GM12878 (cell line): ENCODE measurements at regions of chr12 and their contacts with region 1.

Region 1: DNA sequence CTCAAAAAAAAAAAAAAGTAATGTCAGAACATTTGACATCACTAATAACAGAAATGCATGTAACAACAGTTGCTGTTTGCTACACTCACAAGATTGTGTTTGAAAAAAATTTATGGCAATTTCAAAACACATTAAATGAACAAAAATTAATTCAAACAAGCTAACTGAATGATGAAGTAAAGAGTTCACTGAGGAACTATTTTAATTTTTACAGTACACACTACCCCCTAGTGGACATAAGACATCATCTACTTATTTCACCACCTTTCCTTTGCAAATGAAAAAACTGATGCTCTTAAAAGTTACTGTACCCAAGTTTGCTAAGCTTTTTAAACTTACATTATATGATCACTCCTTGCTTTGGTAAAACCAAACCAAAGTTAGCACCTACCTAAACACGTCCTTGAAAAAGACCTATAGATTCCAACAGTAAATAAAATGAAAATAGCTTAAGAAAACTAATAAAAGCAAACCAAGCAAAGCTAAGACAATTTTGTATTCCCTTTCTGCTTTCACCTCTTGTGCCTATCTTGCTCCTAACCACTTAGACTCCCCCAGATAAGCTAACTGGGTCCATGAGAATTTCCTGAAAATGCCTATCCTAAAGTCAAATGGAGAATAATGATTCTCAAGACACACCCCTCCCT is 22.2 kb downstream of the UBE2N start:
- DNase-seq: no peak
- ATAC-seq: peak; percentile 54
- H3K4me3 ChIP-seq: no peak overlapping the region
- H3K27ac ChIP-seq: no peak overlapping the region
- H3K4me1 ChIP-seq: peaks cover 83% of the 10 kb centered on the region
- H3K27me3 ChIP-seq: no peaks in the 10 kb centered on the region
- CTCF ChIP-seq: peak; percentile 48 to 58 (median 54); a peak in 5 of 6 replicates
- EP300 ChIP-seq: no peak
- POLR2A ChIP-seq: no peak
- RAD21 ChIP-seq: peak; percentile 46; the same call in 1 of the 2 replicates

Region 2: DNA sequence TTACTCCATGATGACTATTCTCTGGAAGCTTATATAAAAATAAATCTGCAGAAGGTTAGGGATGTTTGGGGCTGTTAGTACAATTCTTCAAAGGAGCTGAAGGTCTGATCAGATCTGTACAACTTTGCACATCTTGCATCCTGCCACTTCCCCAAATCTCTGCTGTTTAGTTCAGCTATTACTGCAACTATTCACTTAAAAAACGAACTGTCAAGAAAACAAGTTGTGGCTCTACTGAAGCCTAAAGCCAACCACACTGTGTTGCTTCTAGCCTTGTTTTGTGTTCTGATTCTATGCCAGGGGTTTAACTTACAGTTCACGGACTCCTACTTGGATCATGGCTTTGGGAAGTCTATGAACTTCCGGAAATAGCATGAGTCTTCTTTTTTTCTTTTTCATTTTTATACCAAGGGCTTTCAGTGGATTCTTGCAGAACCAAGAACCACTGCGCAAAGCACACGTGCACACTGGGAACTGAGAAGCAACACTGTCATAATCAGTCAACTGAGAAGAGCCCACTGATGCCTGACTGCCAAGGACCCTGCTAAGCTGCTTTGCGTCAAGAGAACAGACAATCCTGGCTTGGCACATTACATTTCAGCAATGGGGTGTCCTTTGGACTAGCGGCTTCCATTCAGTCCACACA is 424.1 kb before region 1 on chr12:
- CTCF ChIA-PET with region 1: interaction called, 166 read pairs
- POLR2A ChIA-PET with region 1: interaction called, 3 read pairs
- RAD21 ChIA-PET with region 1: interaction called, 11 read pairs
- SMC1A ChIA-PET with region 1: interaction called, 95 read pairs
- in situ Hi-C with region 1: no loop called
- intact Hi-C with region 1: no loop called
- DNase-seq: peak; percentile 87
- ATAC-seq: peak; percentile 94
- H3K4me3 ChIP-seq: peak overlapping the region; percentile 49
- H3K27ac ChIP-seq: peak overlapping the region; percentile 84
- H3K4me1 ChIP-seq: peaks cover 30% of the 10 kb centered on the region
- H3K27me3 ChIP-seq: no peaks in the 10 kb centered on the region
- CTCF ChIP-seq: no peak
- EP300 ChIP-seq: no peak
- POLR2A ChIP-seq: no peak
- RAD21 ChIP-seq: no peak

Region 3: GRCh38 chr12:93098077-93098476 is 321.4 kb before region 1 on chr12:
- CTCF ChIA-PET with region 1: interaction called, 25 read pairs
- POLR2A ChIA-PET with region 1: no interaction called
- RAD21 ChIA-PET with region 1: interaction called, 29 read pairs
- SMC1A ChIA-PET with region 1: interaction called, 23 read pairs
- in situ Hi-C with region 1: no loop called
- intact Hi-C with region 1: no loop called
- DNase-seq: peak; percentile 51
- ATAC-seq: peak; percentile 80
- H3K4me3 ChIP-seq: no peak overlapping the region
- H3K27ac ChIP-seq: no peak overlapping the region
- H3K4me1 ChIP-seq: peaks cover 20% of the 10 kb centered on the region
- H3K27me3 ChIP-seq: no peaks in the 10 kb centered on the region
- CTCF ChIP-seq: peak; percentile 36 to 54 (median 52)
- EP300 ChIP-seq: no peak
- POLR2A ChIP-seq: no peak
- RAD21 ChIP-seq: peak; percentile 80

Region 4: DNA sequence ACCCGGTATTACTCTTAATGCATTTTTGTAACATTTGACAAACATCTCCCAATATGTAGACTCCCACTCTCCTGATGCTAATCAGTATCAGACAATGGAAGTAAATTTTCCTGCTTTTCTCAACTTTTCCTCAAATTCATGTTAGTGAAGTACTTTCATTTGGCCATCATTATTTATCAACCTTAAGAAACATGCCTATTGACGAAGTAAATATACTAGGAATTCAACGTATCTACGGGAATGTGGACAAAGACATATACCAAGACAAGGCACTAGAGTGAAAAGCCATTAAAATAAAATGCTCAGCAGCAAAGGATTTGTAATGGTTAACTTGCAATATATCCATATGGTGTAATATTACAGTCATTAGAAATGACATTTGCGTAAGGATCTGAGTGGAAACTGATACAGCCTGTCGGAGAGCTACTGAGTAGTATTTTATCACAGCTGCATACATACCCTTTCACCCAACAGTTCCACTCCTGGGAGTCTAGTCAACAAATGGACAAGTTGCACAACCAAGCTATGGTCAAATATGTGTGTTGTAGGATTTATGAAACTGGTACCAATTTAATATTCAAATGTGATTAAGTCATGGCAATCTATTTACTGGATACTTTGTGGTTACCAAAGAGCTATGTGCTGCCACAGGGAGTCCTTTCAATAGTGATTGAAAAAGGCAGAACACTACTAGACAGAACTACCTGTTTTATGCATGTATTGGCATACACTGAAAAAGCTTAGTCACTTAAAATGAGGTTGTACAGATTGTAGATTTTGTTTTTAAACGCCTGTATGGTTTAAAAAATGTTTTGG is 15.3 kb before region 1 on chr12:
- CTCF ChIA-PET with region 1: interaction called, 77 read pairs
- POLR2A ChIA-PET with region 1: interaction called, 19 read pairs
- RAD21 ChIA-PET with region 1: interaction called, 14 read pairs
- SMC1A ChIA-PET with region 1: interaction called, 39 read pairs
- in situ Hi-C with region 1: no loop called
- intact Hi-C with region 1: no loop called
- DNase-seq: no peak
- ATAC-seq: peak; percentile 14; the same call in 1 of the 3 replicates
- H3K4me3 ChIP-seq: no peak overlapping the region
- H3K27ac ChIP-seq: no peak overlapping the region
- H3K4me1 ChIP-seq: no peaks in the 10 kb centered on the region
- H3K27me3 ChIP-seq: no peaks in the 10 kb centered on the region
- CTCF ChIP-seq: no peak
- EP300 ChIP-seq: no peak
- POLR2A ChIP-seq: peak; percentile 47; the same call in 1 of the 2 replicates
- RAD21 ChIP-seq: no peak

Region 5: DNA sequence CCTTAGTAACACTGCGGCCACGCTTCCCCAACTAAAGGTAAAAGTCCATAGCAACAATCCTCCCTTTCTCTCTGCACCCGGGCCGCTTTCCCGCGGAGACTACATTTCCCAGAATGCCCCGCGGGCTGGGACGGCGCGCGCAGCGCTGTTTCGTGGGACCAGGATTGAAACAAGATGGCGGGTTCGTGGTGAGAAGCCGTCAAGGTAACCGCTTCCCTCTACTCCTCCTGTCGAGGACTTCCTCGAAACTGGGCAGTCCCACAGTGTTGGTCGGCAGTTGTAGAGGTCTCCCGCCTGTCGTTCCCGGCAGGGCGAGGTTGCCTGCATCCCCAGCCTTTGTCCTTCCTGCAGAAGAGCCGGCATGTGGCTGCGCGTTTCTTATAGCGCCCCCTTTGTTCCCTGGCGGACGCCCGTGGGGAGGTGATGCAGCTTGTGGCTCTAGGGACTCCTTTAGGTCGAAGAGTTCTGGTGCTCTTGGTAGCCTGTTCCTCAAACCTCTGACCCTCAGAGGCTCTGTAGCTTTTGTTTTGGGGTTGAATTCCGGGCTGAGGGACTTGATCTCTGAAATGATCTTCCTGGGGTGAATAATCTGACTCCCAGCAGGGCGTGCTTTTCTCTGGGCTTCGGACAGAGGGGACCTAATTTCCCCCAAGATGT is 48.0 kb after region 1 on chr12 and contains the start of gene MRPL42:
- CTCF ChIA-PET with region 1: interaction called, 8 read pairs
- POLR2A ChIA-PET with region 1: interaction called, 4 read pairs
- RAD21 ChIA-PET with region 1: interaction called, 13 read pairs
- SMC1A ChIA-PET with region 1: interaction called, 20 read pairs
- in situ Hi-C with region 1: no loop called
- intact Hi-C with region 1: no loop called
- DNase-seq: peak; percentile 73
- ATAC-seq: peak; percentile 92
- H3K4me3 ChIP-seq: peak within 1 kb of the TSS; percentile 93
- H3K27ac ChIP-seq: peak within 1 kb of the TSS; percentile 91
- H3K4me1 ChIP-seq: peaks cover 3% of the 10 kb centered on the region; the same call in 1 of the 2 replicates
- H3K27me3 ChIP-seq: no peaks in the 10 kb centered on the region
- CTCF ChIP-seq: peak; percentile 64 to 84 (median 78)
- EP300 ChIP-seq: no peak
- POLR2A ChIP-seq: peak; percentile 93
- RAD21 ChIP-seq: peak; percentile 50; the same call in 1 of the 2 replicates
- polyA plus RNA-seq, gene MRPL42: 281 to 427 TPM